Caco-2 (cell line): ENCODE measurements at regions of chr17 and their contacts with region 1.

Region 1: GRCh38 chr17:27824745-27825144 is 24.4 kb upstream of the NOS2 start:
- DNase-seq: peak; percentile 66 to 70
- H3K4me3 ChIP-seq: no peak overlapping the region
- H3K4me3 Mint-ChIP-seq: no peak overlapping the region
- H3K27ac Mint-ChIP-seq: no peak overlapping the region
- H3K4me1 ChIP-seq: peaks cover 16% of the 10 kb centered on the region
- H3K4me1 Mint-ChIP-seq: peaks cover 25% of the 10 kb centered on the region
- H3K27me3 ChIP-seq: no peaks in the 10 kb centered on the region
- H3K27me3 Mint-ChIP-seq: no peaks in the 10 kb centered on the region
- CTCF ChIP-seq: no peak

Region 2: DNA sequence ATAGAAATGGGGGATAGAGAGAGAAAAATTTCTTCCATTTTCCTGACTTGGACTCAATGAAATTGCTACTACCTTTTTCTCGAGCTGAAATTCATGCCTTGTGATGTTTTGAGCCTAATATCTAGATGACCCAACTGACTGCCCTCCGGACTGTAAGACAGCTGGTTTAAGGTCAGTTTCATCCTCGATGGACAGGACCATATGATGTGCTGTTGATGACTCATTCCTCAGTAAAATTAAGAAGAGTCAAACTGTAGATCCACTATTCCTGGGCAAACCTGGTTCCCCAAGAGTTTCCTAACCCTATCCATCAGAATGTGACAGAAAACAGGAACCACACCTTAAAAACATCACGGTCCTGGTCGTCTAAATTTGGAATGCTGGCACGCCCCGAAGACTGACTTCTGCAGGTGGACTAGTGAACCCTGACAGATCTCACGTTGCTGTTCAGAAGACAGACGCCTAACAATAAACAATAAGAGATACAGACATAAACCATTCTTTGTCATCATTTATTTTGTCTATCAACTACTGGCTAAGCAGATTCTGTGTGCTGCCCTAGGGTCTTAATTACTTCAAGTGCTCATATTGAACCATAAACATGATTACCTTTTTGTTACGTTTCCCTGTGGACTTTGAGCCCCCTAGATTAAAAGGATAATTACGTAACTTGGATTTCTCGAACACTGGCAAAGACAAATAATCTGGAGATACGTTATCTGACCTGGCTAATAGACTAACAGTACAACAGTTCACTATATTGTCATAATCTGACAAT is 20.7 kb after region 1 on chr17:
- CTCF ChIA-PET with region 1: no interaction called
- POLR2A ChIA-PET with region 1: no interaction called
- intact Hi-C with region 1: loop called (anchors 1 kb)
- DNase-seq: peak; percentile 87 to 94
- H3K4me3 ChIP-seq: no peak overlapping the region
- H3K4me3 Mint-ChIP-seq: peak overlapping the region; percentile 58
- H3K27ac Mint-ChIP-seq: peak overlapping the region; percentile 93
- H3K4me1 ChIP-seq: peaks cover 28% of the 10 kb centered on the region
- H3K4me1 Mint-ChIP-seq: peaks cover 18% of the 10 kb centered on the region
- H3K27me3 ChIP-seq: no peaks in the 10 kb centered on the region
- H3K27me3 Mint-ChIP-seq: no peaks in the 10 kb centered on the region
- CTCF ChIP-seq: no peak

Region 3: GRCh38 chr17:27892866-27893769 is 68.4 kb after region 1 on chr17 and contains the start of gene LYRM9:
- CTCF ChIA-PET with region 1: interaction called, 10 read pairs
- POLR2A ChIA-PET with region 1: interaction called, 8 read pairs
- intact Hi-C with region 1: no loop called
- DNase-seq: peak; percentile 98 to 100
- H3K4me3 ChIP-seq: peak within 1 kb of the TSS; percentile 75
- H3K4me3 Mint-ChIP-seq: peak within 1 kb of the TSS; percentile 70
- H3K27ac Mint-ChIP-seq: peak within 1 kb of the TSS; percentile 28
- H3K4me1 ChIP-seq: peaks cover 39% of the 10 kb centered on the region
- H3K4me1 Mint-ChIP-seq: peaks cover 47% of the 10 kb centered on the region
- H3K27me3 ChIP-seq: no peaks in the 10 kb centered on the region
- H3K27me3 Mint-ChIP-seq: no peaks in the 10 kb centered on the region
- CTCF ChIP-seq: peak; percentile 98 to 99
- total RNA-seq, gene LYRM9: 25.6 and 29.1 TPM in 2 replicates